Activated T-helper 1 cell treated with anti-CD3 and anti-CD28 coated beads, Interleukin-12 subunit alpha, Interleukin-12 subunit beta, Interleukin-2, Interleukin-4 antibody, amounts not matched to agents 30 ng/mL and 10 ng/mL and 1 ng/mL, durations not matched to agents 14 hours and 24 hours and 36 hours (primary cell): ENCODE measurements at regions of chr9 and their contacts with region 1.

Region 1: GRCh38 chr9:123929870-123930831 is at the start of gene DENND1A:
- DNase-seq: peak; percentile 85
- H3K4me3 Mint-ChIP-seq: peak within 1 kb of the TSS; percentile 89
- H3K27ac Mint-ChIP-seq: peak within 1 kb of the TSS; percentile 92
- H3K4me1 Mint-ChIP-seq: peaks cover 29% of the 10 kb centered on the region
- H3K27me3 Mint-ChIP-seq: peaks cover 16% of the 10 kb centered on the region
- total RNA-seq, gene DENND1A: 18.5 and 22.8 TPM in 2 replicates

Region 2: DNA sequence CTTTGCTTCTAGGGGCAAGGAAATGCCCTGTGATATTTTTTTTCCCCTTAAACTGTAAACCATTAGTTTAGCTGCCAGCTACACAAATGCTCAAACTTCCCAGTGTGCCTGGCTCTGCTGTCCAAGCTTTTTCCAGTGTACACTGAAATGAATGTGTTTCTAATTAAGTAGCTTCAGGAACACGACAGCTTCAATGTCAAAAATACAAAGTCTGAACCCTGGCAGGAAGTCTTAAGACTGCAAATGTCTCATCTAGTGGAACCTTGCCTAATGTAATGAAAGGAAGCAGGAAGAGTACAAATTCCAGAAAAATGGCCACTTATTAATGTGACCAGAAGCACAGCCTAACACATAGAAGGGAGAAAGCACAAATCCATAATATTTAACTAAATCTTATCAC is 318.9 kb before region 1 on chr9:
- intact Hi-C with region 1: no loop called
- DNase-seq: no peak
- H3K4me3 Mint-ChIP-seq: no peak overlapping the region
- H3K27ac Mint-ChIP-seq: no peak overlapping the region
- H3K4me1 Mint-ChIP-seq: no peaks in the 10 kb centered on the region
- H3K27me3 Mint-ChIP-seq: no peaks in the 10 kb centered on the region

Region 3: DNA sequence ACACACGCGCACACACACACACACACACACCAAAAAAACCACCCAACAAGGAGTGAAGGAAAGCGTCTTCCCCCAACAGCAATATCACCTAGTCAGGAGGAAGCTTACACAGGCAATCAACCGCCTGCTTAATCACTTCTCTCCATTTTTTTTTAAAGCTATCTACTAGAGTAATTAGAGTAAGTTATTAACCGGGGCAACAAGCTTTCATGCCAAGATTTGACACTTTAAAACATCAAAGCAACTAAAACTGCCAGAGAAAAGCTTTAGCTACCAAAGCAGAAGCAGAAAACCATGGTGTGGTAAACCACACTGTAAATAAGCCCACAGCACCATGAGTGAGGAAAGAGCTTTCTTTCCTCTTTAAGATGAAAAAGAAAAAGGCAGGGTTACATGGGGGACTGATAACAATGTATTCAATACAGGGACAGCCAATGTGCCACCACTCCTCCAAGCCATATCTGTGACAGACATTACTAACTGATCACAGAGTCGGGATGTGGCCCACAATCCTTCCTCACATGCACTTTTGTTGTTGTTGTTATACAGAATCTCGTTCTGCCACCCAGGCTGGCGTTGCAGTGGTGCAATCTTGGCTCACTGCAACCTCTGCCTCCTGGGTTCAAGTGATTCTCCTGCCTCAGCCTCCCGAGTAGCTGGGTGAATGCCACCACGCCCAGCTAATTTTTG is 292.1 kb before region 1 on chr9:
- intact Hi-C with region 1: loop called (anchors 5 kb)
- DNase-seq: peak; percentile 26
- H3K4me3 Mint-ChIP-seq: peak overlapping the region; percentile 72
- H3K27ac Mint-ChIP-seq: peak overlapping the region; percentile 64
- H3K4me1 Mint-ChIP-seq: peaks cover 36% of the 10 kb centered on the region
- H3K27me3 Mint-ChIP-seq: peaks cover 36% of the 10 kb centered on the region

Region 4: DNA sequence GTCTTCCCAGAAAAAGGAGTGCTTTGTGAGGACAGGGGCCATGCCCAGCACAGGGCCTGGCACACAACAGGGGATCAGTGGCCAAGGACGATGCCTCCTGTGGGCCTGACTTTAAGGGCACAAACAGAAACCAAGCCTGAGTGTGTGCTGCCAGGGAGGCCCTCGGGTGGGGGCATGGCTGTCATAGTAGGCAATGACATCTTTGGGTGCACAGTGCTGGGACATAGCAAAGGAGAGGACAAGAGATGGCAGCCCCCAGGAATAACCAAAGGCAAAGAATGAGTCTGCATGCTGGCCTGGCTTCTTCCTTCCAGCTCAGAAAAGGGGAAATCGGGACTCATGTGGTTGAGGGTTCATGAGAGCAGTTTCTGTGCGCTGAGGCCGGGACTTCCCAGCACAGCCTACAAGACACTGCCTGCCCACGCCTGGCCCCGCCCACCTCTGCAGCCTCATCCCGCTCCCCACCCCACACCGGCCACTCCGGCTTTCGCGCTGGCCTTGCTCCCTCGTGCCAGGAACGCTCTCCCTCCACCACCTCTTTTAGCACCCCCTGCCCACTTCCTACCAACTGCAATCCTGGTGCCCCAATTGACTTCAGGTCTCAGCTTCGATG is 67.6 kb after region 1 on chr9:
- intact Hi-C with region 1: loop called (anchors 2 kb)
- DNase-seq: no peak
- H3K4me3 Mint-ChIP-seq: peak overlapping the region; percentile 66
- H3K27ac Mint-ChIP-seq: peak overlapping the region; percentile 49
- H3K4me1 Mint-ChIP-seq: peaks cover 42% of the 10 kb centered on the region
- H3K27me3 Mint-ChIP-seq: peaks cover 74% of the 10 kb centered on the region